Heart left ventricle (tissue), 16 donors: ENCODE measurements at regions of chr3 and their contacts with region 1.

Region 1: DNA sequence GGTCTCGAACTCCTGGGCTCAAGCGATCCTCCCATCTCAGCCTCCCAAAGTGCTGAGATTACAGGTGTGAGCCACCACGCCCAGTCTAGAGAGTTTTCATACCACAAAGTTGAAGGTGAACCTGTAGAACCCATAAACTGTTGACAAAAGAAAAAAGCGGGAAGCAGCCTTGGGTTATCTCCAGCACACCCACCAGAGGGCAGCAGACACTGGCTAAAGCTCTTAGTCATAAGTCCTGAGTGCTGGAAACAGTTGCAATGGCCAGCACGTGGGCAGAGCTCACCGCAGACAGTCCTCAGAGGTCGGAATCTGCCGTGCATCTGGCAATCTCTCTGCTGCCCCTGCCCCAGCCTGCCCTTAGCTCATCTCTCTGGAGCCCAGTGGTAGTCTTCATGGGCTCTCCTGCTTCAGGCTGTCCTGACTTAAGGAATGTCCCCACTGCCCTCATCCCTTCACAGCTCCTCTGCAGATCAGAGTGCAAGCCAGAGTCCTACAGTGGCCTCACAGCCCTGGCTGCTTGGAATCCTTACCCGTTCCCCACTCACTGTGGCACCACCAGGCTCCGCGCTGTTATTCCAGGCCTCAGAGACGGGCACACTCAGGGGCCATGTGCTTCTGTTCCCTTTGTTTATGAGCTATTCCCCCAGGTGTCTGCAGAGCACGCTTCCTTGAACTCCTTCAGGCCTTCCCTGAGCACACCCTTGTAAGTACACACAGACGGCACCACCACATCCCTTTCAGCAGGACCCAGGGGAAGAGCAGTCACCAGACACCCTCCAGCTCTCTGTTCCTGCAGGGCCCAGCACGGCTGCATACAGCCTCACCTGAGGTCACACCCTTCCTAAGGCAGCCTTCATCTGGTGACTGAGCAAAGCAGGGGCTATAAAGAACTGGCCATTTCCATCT is 8.8 kb upstream of the ELP6 start:
- DNase-seq: peak; percentile 73 to 85 (median 81)
- ATAC-seq: peak; percentile 69 to 98 (median 95)
- H3K4me3 ChIP-seq: no peak overlapping the region
- H3K27ac ChIP-seq: no peak overlapping the region
- H3K4me1 ChIP-seq: peaks cover 0 to 8% (median 3%) of the 10 kb centered on the region in 12 donors
- H3K27me3 ChIP-seq: no peaks in the 10 kb centered on the region
- CTCF ChIP-seq: peak; percentile 76 to 94 (median 88)
- POLR2A ChIP-seq: no peak

Region 2: GRCh38 chr3:47612178-47612577 is 89.8 kb after region 1 on chr3:
- intact Hi-C with region 1: loop called in 1 of 10 experiments (anchors 5 kb)
- DNase-seq: no peak
- ATAC-seq: peak; percentile 75 to 94 (median 84)
- H3K4me3 ChIP-seq: no peak overlapping the region
- H3K27ac ChIP-seq: peak overlapping the region in 8 of 12 donors; percentile 14 to 66 (median 40)
- H3K4me1 ChIP-seq: peaks cover 0 to 38% (median 21%) of the 10 kb centered on the region in 12 donors
- H3K27me3 ChIP-seq: no peaks in the 10 kb centered on the region
- CTCF ChIP-seq: no peak
- POLR2A ChIP-seq: no peak

Region 3: GRCh38 chr3:47791193-47791855 is 269.0 kb after region 1 on chr3:
- intact Hi-C with region 1: loop called (anchors 1 to 2 kb)
- DNase-seq: no peak
- ATAC-seq: no peak
- H3K4me3 ChIP-seq: no peak overlapping the region
- H3K27ac ChIP-seq: no peak overlapping the region
- H3K4me1 ChIP-seq: peaks cover 0 to 5% (median 0%) of the 10 kb centered on the region in 12 donors
- H3K27me3 ChIP-seq: no peaks in the 10 kb centered on the region
- CTCF ChIP-seq: no peak
- POLR2A ChIP-seq: no peak

Region 4: GRCh38 chr3:47802734-47803477 is 280.6 kb after region 1 on chr3 and contains the start of gene DHX30:
- intact Hi-C with region 1: loop called in 1 of 10 experiments (anchors 5 kb)
- DNase-seq: peak; percentile 91 to 95 (median 92)
- ATAC-seq: peak; percentile 79 to 96 (median 91)
- H3K4me3 ChIP-seq: peak within 1 kb of the TSS; percentile 69 to 99 (median 90)
- H3K27ac ChIP-seq: peak within 1 kb of the TSS; percentile 94 to 99 (median 98)
- H3K4me1 ChIP-seq: peaks cover 0 to 26% (median 16%) of the 10 kb centered on the region in 12 donors
- H3K27me3 ChIP-seq: no peaks in the 10 kb centered on the region
- CTCF ChIP-seq: no peak
- POLR2A ChIP-seq: peak in 1 of 2 donors; percentile 90
- total RNA-seq, gene DHX30: 41.2 to 74.4 (median 49.4) TPM

Region 5: DNA sequence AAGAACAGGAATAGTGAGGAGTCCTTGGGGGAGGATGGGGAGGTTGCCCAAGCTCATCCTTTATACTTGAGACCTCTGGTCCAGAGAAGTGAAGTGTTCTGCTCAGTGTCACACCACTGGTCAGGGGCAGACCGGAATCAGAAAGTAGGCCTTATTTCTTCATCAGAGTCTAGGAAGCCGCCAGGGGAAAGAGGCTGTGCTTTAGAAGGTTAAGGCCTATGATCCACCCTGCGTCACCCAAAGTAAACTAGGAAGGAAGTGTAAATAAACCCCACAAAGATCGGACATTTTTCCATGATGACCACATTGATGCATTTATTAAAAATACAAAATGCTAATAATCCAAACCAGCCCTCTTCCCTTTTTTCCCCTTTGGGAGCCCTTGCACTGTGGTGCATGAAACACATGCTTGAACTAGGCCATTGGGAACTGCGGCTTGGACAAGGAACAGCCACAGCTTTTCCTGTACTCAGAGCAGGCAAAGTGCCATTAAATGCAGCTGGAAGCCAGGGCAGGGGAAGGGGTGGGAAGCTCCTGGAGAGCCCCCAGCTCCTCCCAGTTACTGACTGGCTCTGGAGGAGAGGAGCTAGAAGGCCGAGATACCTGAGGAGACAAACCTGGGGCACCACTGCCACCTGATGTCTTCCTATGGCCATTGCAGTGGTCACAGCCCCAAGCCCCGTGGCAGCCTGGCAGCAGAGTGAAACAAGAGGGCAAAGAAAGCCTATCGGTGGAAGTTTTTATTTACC is 628.9 kb after region 1 on chr3:
- intact Hi-C with region 1: loop called in 3 of 10 experiments (anchors 10 kb)
- DNase-seq: peak; percentile 80 to 86 (median 82)
- ATAC-seq: peak; percentile 94 to 98 (median 96)
- H3K4me3 ChIP-seq: peak overlapping the region in 2 of 12 donors; percentile 8
- H3K27ac ChIP-seq: peak overlapping the region in 10 of 12 donors; percentile 1 to 74 (median 59)
- H3K4me1 ChIP-seq: peaks cover 0 to 22% (median 17%) of the 10 kb centered on the region in 12 donors
- H3K27me3 ChIP-seq: no peaks in the 10 kb centered on the region
- CTCF ChIP-seq: peak; percentile 53 to 93 (median 84)
- POLR2A ChIP-seq: no peak